OCI-LY7 (cell line): ENCODE measurements at regions of chr21 and their contacts with region 1.

Region 1: GRCh38 chr21:31781737-31782136 is 49.8 kb upstream of the SCAF4 start:
- DNase-seq: no peak
- H3K4me3 ChIP-seq: no peak overlapping the region
- H3K27ac ChIP-seq: no peak overlapping the region
- H3K4me1 ChIP-seq: peaks cover 5% of the 10 kb centered on the region
- CTCF ChIP-seq: no peak

Region 2: GRCh38 chr21:32096411-32096810 is 314.7 kb after region 1 on chr21:
- CTCF ChIA-PET with region 1: no interaction called
- POLR2A ChIA-PET with region 1: no interaction called
- intact Hi-C with region 1: loop called (anchors 2 kb)
- DNase-seq: peak; percentile 11
- H3K4me3 ChIP-seq: no peak overlapping the region
- H3K27ac ChIP-seq: no peak overlapping the region
- H3K4me1 ChIP-seq: no peaks in the 10 kb centered on the region
- CTCF ChIP-seq: peak; percentile 64

Region 3: DNA sequence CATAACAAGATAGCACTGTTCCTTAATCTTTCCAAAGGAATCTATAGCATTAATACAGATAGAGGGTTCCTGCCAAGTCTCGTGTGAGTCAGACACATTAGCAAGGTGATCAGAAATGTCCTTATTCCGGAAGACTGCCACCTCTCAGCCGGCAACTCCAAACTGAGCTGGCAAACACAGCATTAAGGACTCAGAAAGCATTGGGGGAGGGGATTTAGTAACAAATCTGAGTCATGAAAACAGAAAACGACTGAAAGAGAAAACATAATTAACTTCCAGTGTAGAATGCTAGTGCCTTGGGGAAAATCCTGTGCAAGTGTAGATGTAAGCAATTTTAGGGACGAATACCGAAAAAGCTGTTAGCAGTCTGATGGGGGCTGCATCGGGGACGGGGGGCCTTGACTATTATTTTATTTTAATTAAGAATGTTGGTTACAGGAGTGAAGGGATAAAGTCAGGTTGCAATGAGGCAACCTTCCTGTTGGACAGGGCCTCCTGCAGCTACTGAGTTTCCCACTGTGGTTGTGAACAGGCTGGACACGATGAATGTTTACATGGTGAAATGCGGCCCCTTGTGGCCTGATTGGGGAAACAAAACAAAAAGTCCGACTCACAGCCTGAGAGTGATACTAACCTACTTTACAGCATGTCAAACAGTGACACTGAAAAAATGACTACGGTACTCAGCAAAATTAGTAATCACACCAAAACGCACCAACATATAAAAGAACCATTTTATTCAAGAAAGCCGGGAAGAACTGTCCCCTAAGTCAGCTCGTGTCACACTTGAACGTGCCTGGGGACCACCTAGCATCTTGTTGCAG is 476.4 kb after region 1 on chr21:
- CTCF ChIA-PET with region 1: interaction called, 4 read pairs
- POLR2A ChIA-PET with region 1: interaction called, 3 read pairs
- intact Hi-C with region 1: loop called (anchors 1 kb)
- DNase-seq: peak; percentile 62
- H3K4me3 ChIP-seq: no peak overlapping the region
- H3K27ac ChIP-seq: no peak overlapping the region
- H3K4me1 ChIP-seq: no peaks in the 10 kb centered on the region
- CTCF ChIP-seq: peak; percentile 86

Region 4: DNA sequence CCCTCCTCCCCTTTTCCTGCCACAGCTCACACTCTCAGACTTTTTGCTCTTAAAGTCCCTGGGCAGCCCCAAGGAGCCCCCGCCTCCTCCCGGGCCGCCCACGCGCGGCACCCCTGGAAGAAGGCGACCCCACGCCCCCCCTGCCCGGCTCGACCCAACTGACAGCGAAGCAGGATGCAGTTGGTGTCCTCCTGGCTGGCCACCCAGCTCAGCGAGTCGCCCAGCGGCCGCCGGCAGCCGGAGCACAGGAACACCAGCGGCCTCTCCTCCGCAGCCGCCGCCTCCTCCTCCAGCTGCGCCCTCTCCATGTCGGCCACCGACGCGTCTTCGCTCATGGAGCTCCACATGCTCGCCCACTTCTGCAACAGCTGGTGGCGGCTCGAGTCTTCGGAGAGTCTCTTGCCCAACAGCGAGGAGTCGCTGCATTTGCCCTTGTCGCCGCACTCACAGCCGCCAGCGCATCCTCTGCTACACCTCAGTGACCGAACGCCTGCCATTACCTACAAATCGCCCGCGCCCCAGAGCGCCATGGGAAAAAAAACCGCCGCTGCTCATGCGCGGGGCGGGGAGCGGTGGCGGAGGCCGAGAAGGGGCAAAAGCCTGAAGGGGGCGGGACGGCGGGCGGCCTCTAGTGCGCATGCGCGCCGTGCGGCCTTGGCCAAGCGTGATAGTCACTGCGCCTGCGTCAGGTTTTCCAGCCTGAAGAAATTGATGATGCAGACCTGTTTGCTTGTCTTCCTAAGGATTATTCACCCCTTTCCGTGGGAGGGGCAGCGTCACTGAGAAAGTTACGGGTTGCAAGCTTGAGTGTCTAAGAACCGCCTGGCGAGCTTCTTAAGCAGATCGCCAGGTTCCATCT is 497.0 kb after region 1 on chr21 and contains the start of gene MIS18A:
- CTCF ChIA-PET with region 1: no interaction called
- POLR2A ChIA-PET with region 1: no interaction called
- intact Hi-C with region 1: loop called (anchors 5 kb)
- DNase-seq: peak; percentile 94
- H3K4me3 ChIP-seq: peak within 1 kb of the TSS; percentile 90
- H3K27ac ChIP-seq: peak within 1 kb of the TSS; percentile 80
- H3K4me1 ChIP-seq: peaks cover 23% of the 10 kb centered on the region
- CTCF ChIP-seq: 0 out of 2 replicates have a peak, but pooled peaks have one; percentile 17
- total RNA-seq, gene MIS18A: 25.2 and 31.7 TPM in 2 replicates

Region 5: DNA sequence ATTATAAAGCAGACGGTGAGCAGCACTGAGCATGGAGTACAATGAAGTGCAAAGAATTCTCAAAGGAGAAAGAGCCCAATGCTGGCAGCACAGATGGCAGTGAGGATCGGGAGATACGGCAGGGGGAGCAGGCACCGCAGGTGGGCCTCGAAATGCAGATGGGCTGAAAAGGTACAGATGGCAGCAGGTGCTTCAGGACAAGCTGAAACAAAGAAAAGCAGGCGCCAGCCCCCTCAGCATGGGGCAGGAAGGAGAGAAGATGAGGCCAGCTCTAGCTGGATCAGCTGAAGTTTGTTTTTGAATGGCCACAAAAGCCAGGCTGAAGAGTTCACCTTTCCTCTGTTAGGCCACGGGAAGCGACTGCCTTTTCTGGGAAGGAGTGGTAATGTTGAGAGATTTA is 822.7 kb after region 1 on chr21:
- CTCF ChIA-PET with region 1: no interaction called
- POLR2A ChIA-PET with region 1: no interaction called
- intact Hi-C with region 1: loop called (anchors 10 kb)
- DNase-seq: no peak
- H3K4me3 ChIP-seq: no peak overlapping the region
- H3K27ac ChIP-seq: no peak overlapping the region
- H3K4me1 ChIP-seq: peaks cover 8% of the 10 kb centered on the region
- CTCF ChIP-seq: no peak